Heart left ventricle (tissue), 16 donors: ENCODE measurements at regions of chr12 and their contacts with region 1.

Region 1: GRCh38 chr12:39103552-39104165 is 198.3 kb upstream of the CPNE8 start:
- DNase-seq: peak in 2 of 5 donors; percentile 19 to 24
- ATAC-seq: peak; percentile 81 to 89 (median 88)
- H3K4me3 ChIP-seq: no peak overlapping the region
- H3K27ac ChIP-seq: no peak overlapping the region
- H3K4me1 ChIP-seq: no peaks in the 10 kb centered on the region
- H3K27me3 ChIP-seq: peaks cover 0 to 4% (median 0%) of the 10 kb centered on the region in 9 donors
- CTCF ChIP-seq: peak; percentile 63 to 88 (median 80)
- POLR2A ChIP-seq: no peak

Region 2: GRCh38 chr12:38138225-38139221 is 965.1 kb before region 1 on chr12:
- intact Hi-C with region 1: loop called in 1 of 10 experiments (anchors 5 kb)
- DNase-seq: peak in 4 of 5 donors; percentile 51 to 64 (median 58)
- ATAC-seq: peak in 3 of 4 donors; percentile 48 to 71 (median 59)
- H3K4me3 ChIP-seq: peak overlapping the region in 10 of 12 donors; percentile 20 to 55 (median 36)
- H3K27ac ChIP-seq: no peak overlapping the region
- H3K4me1 ChIP-seq: peaks cover 0 to 11% (median 5%) of the 10 kb centered on the region in 12 donors
- H3K27me3 ChIP-seq: peaks cover 0 to 21% (median 10%) of the 10 kb centered on the region in 9 donors
- CTCF ChIP-seq: peak; percentile 94 to 99 (median 98)
- POLR2A ChIP-seq: no peak

Region 3: DNA sequence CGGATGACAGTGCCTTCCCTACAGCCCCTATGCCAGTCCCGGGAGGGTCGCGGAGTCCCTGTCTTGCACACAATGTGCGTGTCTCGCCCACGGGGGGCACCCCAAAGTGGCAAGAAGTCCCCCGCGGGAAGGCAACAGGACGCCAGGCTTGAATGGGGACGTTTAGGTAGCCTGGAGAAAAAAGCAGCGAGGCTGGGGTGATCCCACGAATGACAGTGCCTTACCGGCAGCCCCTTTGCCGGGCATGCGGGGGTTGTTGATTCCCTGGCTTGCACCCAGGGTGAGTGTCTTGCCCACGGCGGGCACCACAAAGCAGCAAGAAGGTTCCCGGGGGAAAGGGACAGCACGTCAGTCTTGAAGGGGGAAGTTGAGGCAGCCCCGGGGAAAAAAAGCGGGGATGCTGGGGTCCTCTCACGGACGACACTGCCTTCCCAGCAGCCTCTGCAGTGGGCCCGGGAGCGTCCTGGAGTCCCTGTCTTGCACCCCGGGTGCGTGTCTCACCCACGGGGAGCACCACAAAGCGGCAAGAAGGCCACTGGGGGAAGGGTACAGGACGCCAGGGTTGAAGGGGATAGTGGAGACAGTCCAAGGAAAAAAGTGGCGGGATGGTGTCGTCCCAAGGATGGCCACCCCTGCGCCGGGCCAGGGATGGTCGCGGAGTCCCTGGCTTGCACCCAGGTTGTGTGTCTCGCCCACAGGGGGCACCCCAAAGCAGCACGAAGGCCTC is 943.9 kb before region 1 on chr12:
- intact Hi-C with region 1: no loop called
- DNase-seq: no peak
- ATAC-seq: no peak
- H3K4me3 ChIP-seq: no peak overlapping the region
- H3K27ac ChIP-seq: no peak overlapping the region
- H3K4me1 ChIP-seq: no peaks in the 10 kb centered on the region
- H3K27me3 ChIP-seq: no peaks in the 10 kb centered on the region
- CTCF ChIP-seq: no peak
- POLR2A ChIP-seq: no peak

Region 4: DNA sequence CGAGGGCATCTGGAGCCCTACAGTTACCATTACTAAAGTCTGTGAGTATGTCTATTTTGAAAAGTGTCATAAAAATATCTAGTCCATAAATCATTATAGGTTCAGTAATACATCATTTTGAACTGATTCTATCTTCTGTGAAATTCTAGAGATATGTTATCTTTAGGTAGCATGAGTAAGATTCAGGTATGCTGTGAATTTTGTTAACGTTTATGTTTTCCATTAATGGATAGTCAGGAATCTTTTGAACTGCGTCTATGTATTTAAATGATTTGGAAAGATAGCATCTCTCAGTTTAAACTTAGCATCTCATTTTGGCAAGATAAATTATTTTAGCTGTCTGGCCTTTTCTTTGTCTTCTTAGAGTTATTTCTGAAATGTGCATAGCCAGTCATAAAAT is 778.8 kb before region 1 on chr12:
- intact Hi-C with region 1: loop called in 9 of 10 experiments (anchors 2 to 10 kb)
- DNase-seq: no peak
- ATAC-seq: no peak
- H3K4me3 ChIP-seq: no peak overlapping the region
- H3K27ac ChIP-seq: no peak overlapping the region
- H3K4me1 ChIP-seq: no peaks in the 10 kb centered on the region
- H3K27me3 ChIP-seq: no peaks in the 10 kb centered on the region
- CTCF ChIP-seq: no peak
- POLR2A ChIP-seq: no peak

Region 5: GRCh38 chr12:38332814-38333213 is 770.8 kb before region 1 on chr12:
- intact Hi-C with region 1: loop called in 9 of 10 experiments (anchors 2 to 10 kb)
- DNase-seq: no peak
- ATAC-seq: no peak
- H3K4me3 ChIP-seq: no peak overlapping the region
- H3K27ac ChIP-seq: no peak overlapping the region
- H3K4me1 ChIP-seq: no peaks in the 10 kb centered on the region
- H3K27me3 ChIP-seq: no peaks in the 10 kb centered on the region
- CTCF ChIP-seq: no peak
- POLR2A ChIP-seq: no peak

Region 6: DNA sequence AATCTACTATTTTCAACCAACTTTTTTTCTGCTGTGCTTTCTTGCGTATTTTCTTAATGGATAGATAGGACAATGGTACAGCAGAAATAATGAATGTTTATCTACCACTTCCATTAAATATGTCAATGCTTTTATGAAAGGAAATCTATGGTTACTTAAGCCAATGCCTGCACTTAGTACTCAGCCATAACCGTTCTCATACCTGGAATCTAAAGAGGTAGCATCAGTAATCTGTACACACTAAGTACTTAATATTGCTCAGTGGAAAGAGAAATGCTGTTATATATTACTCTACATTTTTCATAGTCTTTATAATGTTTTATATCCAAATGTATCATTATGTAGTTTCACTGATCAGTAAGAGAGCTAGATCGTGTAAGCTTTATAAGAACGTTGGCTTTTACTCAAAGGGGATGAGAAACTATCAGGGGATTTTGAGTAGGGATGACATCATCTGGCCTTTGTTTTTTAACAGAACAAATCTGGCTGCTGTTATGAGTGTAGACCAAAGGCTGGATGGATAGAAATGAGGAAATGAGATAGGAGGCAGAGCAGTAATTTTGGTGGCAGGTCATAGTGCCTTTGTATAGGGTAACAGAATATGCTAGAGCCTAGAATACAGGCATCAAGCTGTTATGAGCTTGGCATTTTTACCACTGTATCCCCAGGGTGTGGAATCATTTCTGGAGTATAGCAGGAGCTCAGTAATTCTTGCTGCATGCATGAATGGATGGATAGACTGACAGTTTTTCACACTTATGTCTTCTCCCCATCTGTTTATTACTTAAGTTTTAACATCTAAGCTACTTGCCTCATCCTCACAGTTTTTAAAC is 753.1 kb before region 1 on chr12:
- intact Hi-C with region 1: loop called in 1 of 10 experiments (anchors 10 kb)
- DNase-seq: no peak
- ATAC-seq: no peak
- H3K4me3 ChIP-seq: no peak overlapping the region
- H3K27ac ChIP-seq: no peak overlapping the region
- H3K4me1 ChIP-seq: no peaks in the 10 kb centered on the region
- H3K27me3 ChIP-seq: no peaks in the 10 kb centered on the region
- CTCF ChIP-seq: no peak
- POLR2A ChIP-seq: no peak

Region 7: GRCh38 chr12:38664661-38665269 is 438.9 kb before region 1 on chr12:
- intact Hi-C with region 1: loop called in 1 of 10 experiments (anchors 10 kb)
- DNase-seq: no peak
- ATAC-seq: no peak
- H3K4me3 ChIP-seq: no peak overlapping the region
- H3K27ac ChIP-seq: no peak overlapping the region
- H3K4me1 ChIP-seq: no peaks in the 10 kb centered on the region
- H3K27me3 ChIP-seq: no peaks in the 10 kb centered on the region
- CTCF ChIP-seq: peak in 11 of 12 donors; percentile 13 to 47 (median 27)
- POLR2A ChIP-seq: no peak

Region 8: DNA sequence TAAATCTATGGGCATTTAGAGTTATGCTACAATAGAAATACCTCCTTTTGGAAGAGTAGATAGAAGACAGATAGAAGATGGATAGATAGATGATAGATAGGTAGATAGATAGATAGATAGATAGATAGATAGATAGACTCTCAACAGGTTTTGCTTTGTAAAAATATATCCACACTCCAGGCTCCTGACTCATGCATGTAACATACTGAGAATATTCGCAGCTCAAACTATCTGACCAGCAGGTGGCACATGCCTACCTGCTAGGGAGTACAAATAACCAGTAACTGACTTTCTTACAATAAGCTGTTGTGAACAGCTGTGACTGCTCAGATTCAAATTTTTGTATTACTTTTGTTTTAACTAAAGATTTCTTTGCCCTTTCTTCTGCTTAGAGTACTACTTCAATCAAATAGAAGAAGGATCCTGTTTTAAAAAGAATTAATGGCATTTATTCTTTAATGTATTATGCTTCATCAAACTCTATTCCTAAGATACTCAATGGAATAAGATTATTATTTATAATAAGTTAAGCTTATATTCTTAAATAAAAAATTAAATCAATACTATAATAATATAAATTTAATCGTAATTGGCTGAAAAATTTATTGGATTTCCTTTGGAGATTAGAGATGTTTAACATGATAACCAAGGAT is 182.5 kb before region 1 on chr12:
- intact Hi-C with region 1: loop called (anchors 1 to 5 kb)
- DNase-seq: peak in 4 of 5 donors; percentile 12 to 49 (median 32)
- ATAC-seq: peak in 3 of 4 donors; percentile 53 to 65 (median 64)
- H3K4me3 ChIP-seq: no peak overlapping the region
- H3K27ac ChIP-seq: no peak overlapping the region
- H3K4me1 ChIP-seq: no peaks in the 10 kb centered on the region
- H3K27me3 ChIP-seq: no peaks in the 10 kb centered on the region
- CTCF ChIP-seq: peak; percentile 31 to 70 (median 54)
- POLR2A ChIP-seq: no peak

Region 9: GRCh38 chr12:39070775-39071174 is 32.9 kb before region 1 on chr12:
- intact Hi-C with region 1: no loop called
- DNase-seq: no peak
- ATAC-seq: no peak
- H3K4me3 ChIP-seq: no peak overlapping the region
- H3K27ac ChIP-seq: no peak overlapping the region
- H3K4me1 ChIP-seq: no peaks in the 10 kb centered on the region
- H3K27me3 ChIP-seq: no peaks in the 10 kb centered on the region
- CTCF ChIP-seq: no peak
- POLR2A ChIP-seq: no peak